ENCODE measurements at regions of chr4 and their contacts with region 1.

Region 1: DNA sequence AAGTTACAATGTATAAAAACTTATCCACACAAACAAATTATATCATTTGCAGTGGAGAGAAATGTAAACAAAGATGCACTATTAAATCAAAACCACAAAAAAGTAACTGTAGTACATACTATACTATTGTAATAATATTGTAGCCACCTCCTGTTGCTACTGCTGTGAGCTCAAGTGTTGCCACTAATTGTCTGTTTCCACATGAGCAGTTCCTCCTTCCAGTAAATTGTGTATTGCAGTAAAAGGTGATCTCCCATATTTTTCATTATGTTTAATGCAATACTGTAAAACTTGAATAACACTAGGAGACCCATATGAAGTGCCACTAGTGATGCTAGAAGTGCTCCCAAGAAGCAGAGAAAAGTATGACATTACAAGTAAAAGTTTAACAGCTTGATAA is 11.7 kb downstream of the LIN54 start:
- DNase-seq: no peak
- ATAC-seq: no peak
- H3K4me3 Mint-ChIP-seq: no peak overlapping the region
- H3K27ac Mint-ChIP-seq: no peak overlapping the region
- H3K4me1 Mint-ChIP-seq: no peaks in the 10 kb centered on the region
- H3K27me3 Mint-ChIP-seq: no peaks in the 10 kb centered on the region
- CTCF ChIP-seq: no peak

Region 2: DNA sequence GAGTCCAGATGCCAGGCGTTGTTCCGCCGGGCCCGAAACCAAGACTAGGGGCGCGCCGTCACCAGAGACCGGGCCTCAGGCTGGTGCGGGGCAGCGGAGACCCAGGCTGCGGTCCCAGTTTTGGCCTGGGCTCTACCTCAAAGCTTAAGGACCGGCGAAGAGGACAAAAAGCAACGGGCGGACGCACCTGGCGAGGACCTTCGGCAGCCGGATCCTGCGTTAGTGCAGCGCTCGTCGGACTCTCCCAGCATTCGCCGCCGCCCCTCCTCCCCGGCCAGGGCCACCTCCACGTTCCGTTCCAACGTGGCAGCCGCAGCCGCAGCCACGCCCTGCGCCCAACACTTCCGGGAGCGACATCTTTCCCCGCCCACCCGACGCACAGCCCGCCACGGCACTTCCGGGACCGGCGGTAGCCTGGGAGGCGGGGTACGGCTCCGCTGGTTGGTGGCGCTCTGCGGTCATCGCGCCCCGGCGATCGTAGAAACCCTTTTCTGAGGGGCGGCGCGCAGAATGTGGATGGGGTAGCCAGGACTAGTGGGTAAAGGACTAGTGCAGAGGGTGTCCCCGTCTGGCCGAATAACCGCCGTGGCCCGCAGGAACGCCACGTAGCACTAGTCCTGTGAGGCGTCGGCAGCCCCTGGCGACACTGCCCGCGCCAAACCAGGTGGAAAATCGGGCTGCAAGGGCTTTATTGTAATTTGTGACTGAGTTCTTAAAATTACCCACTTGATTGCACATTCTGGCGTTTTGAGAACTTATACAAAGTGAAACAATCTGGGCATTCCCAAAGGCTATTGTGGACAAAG is 107.8 kb before region 1 on chr4 and contains the start of gene SEC31A:
- CTCF ChIA-PET with region 1: no interaction called
- POLR2A ChIA-PET with region 1: interaction called, 15 read pairs
- intact Hi-C with region 1: no loop called
- DNase-seq: peak; percentile 97
- ATAC-seq: peak; percentile 92
- H3K4me3 Mint-ChIP-seq: peak within 1 kb of the TSS; percentile 93
- H3K27ac Mint-ChIP-seq: peak within 1 kb of the TSS; percentile 94
- H3K4me1 Mint-ChIP-seq: peaks cover 34% of the 10 kb centered on the region
- H3K27me3 Mint-ChIP-seq: no peaks in the 10 kb centered on the region
- CTCF ChIP-seq: no peak
- total RNA-seq, gene SEC31A: 154 and 172 TPM in 2 replicates

Region 3: GRCh38 chr4:83093130-83093529 is 94.2 kb after region 1 on chr4:
- CTCF ChIA-PET with region 1: no interaction called
- POLR2A ChIA-PET with region 1: interaction called, 11 read pairs
- intact Hi-C with region 1: no loop called
- DNase-seq: no peak
- ATAC-seq: no peak
- H3K4me3 Mint-ChIP-seq: no peak overlapping the region
- H3K27ac Mint-ChIP-seq: peak overlapping the region; percentile 76
- H3K4me1 Mint-ChIP-seq: peaks cover 32% of the 10 kb centered on the region
- H3K27me3 Mint-ChIP-seq: no peaks in the 10 kb centered on the region
- CTCF ChIP-seq: no peak